HepG2 (cell line): ENCODE measurements at regions of chr6 and their contacts with region 1.

Region 1: GRCh38 chr6:55239099-55239498 is 64.8 kb downstream of the HCRTR2 start:
- DNase-seq: no peak
- ATAC-seq: no peak
- H3K4me3 ChIP-seq: no peak overlapping the region
- H3K27ac ChIP-seq: no peak overlapping the region
- H3K4me1 ChIP-seq: no peaks in the 10 kb centered on the region
- H3K27me3 ChIP-seq: no peaks in the 10 kb centered on the region
- CTCF ChIP-seq: no peak
- EP300 ChIP-seq: no peak
- POLR2A ChIP-seq: no peak
- RAD21 ChIP-seq: no peak

Region 2: GRCh38 chr6:53926525-53926924 is 1312.6 kb before region 1 on chr6:
- CTCF ChIA-PET with region 1: no interaction called
- POLR2A ChIA-PET with region 1: no interaction called
- in situ Hi-C with region 1: no loop called
- intact Hi-C with region 1: no loop called
- DNase-seq: no peak
- ATAC-seq: no peak
- H3K4me3 ChIP-seq: no peak overlapping the region
- H3K27ac ChIP-seq: no peak overlapping the region
- H3K4me1 ChIP-seq: peaks cover 6% of the 10 kb centered on the region; the same call in 1 of the 2 replicates
- H3K27me3 ChIP-seq: no peaks in the 10 kb centered on the region
- CTCF ChIP-seq: no peak
- EP300 ChIP-seq: no peak
- POLR2A ChIP-seq: no peak
- RAD21 ChIP-seq: no peak

Region 3: GRCh38 chr6:53979468-53980067 is 1259.5 kb before region 1 on chr6:
- CTCF ChIA-PET with region 1: no interaction called
- POLR2A ChIA-PET with region 1: no interaction called
- in situ Hi-C with region 1: loop called (anchors 25 kb)
- intact Hi-C with region 1: loop called (anchors 5 kb)
- DNase-seq: peak; percentile 43
- ATAC-seq: no peak
- H3K4me3 ChIP-seq: no peak overlapping the region
- H3K27ac ChIP-seq: no peak overlapping the region
- H3K4me1 ChIP-seq: no peaks in the 10 kb centered on the region
- H3K27me3 ChIP-seq: no peaks in the 10 kb centered on the region
- CTCF ChIP-seq: peak; percentile 77
- EP300 ChIP-seq: no peak
- POLR2A ChIP-seq: no peak
- RAD21 ChIP-seq: peak; percentile 59; the same call in 1 of the 2 replicates

Region 4: DNA sequence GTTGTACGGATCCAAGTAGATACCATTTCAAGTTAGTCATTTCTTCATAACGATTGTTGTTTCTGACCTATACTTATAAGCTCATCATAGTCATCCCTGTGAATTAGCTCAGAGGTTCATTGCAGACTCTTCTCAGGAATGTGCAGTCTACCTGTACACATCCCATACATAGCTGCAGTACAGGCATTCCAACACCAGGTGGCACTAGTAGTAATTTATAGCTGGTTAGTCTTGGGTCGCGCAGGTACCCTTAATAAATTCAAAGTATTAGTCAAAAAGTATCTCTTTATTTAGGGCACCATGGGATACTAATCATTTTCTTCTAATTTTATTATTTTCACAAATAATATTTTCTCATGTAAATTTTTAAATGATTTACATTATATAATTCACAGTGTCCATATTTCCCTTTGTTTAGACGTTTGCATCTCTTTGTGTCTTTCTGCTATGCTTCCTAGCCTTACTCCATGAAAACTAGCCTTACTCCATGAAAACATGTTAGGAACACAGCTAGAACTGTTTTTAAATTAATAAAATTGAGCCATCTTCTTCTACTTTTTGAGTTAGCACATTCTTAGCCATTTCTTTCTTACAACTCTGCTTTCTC is 521.1 kb before region 1 on chr6:
- CTCF ChIA-PET with region 1: no interaction called
- POLR2A ChIA-PET with region 1: no interaction called
- in situ Hi-C with region 1: loop called (anchors 25 kb)
- intact Hi-C with region 1: loop called (anchors 5 kb)
- DNase-seq: peak; percentile 77
- ATAC-seq: peak; percentile 92
- H3K4me3 ChIP-seq: no peak overlapping the region
- H3K27ac ChIP-seq: no peak overlapping the region
- H3K4me1 ChIP-seq: no peaks in the 10 kb centered on the region
- H3K27me3 ChIP-seq: no peaks in the 10 kb centered on the region
- CTCF ChIP-seq: peak; percentile 76
- EP300 ChIP-seq: no peak
- POLR2A ChIP-seq: no peak
- RAD21 ChIP-seq: no peak; the same call in 1 of the 2 replicates

Region 5: GRCh38 chr6:54980511-54981275 is 258.4 kb before region 1 on chr6:
- CTCF ChIA-PET with region 1: no interaction called
- POLR2A ChIA-PET with region 1: no interaction called
- in situ Hi-C with region 1: no loop called
- intact Hi-C with region 1: no loop called
- DNase-seq: no peak
- ATAC-seq: no peak
- H3K4me3 ChIP-seq: no peak overlapping the region
- H3K27ac ChIP-seq: no peak overlapping the region
- H3K4me1 ChIP-seq: no peaks in the 10 kb centered on the region
- H3K27me3 ChIP-seq: no peaks in the 10 kb centered on the region
- CTCF ChIP-seq: no peak
- EP300 ChIP-seq: no peak
- POLR2A ChIP-seq: no peak
- RAD21 ChIP-seq: no peak

Region 6: GRCh38 chr6:55286824-55287223 is 47.7 kb after region 1 on chr6:
- CTCF ChIA-PET with region 1: no interaction called
- POLR2A ChIA-PET with region 1: no interaction called
- in situ Hi-C with region 1: no loop called
- intact Hi-C with region 1: loop called (anchors 1 kb)
- DNase-seq: no peak
- ATAC-seq: no peak
- H3K4me3 ChIP-seq: no peak overlapping the region
- H3K27ac ChIP-seq: no peak overlapping the region
- H3K4me1 ChIP-seq: no peaks in the 10 kb centered on the region
- H3K27me3 ChIP-seq: no peaks in the 10 kb centered on the region
- CTCF ChIP-seq: no peak
- EP300 ChIP-seq: no peak
- POLR2A ChIP-seq: no peak
- RAD21 ChIP-seq: no peak